Common myeloid progenitor, CD34-positive (primary cell): ENCODE measurements at regions of chr4 and their contacts with region 1.

Region 1: GRCh38 chr4:77618383-77619122 is 12.9 kb downstream of the CXCL13 start:
- DNase-seq: peak; percentile 57 to 83 (median 78)
- H3K4me3 ChIP-seq: peak overlapping the region in 1 of 7 experiments; percentile 44
- H3K27ac ChIP-seq: no peak overlapping the region
- H3K4me1 ChIP-seq: peaks cover 0 to 2% (median 0%) of the 10 kb centered on the region in 4 experiments
- H3K27me3 ChIP-seq: peaks cover 0 to 6% (median 0%) of the 10 kb centered on the region in 5 experiments

Region 2: DNA sequence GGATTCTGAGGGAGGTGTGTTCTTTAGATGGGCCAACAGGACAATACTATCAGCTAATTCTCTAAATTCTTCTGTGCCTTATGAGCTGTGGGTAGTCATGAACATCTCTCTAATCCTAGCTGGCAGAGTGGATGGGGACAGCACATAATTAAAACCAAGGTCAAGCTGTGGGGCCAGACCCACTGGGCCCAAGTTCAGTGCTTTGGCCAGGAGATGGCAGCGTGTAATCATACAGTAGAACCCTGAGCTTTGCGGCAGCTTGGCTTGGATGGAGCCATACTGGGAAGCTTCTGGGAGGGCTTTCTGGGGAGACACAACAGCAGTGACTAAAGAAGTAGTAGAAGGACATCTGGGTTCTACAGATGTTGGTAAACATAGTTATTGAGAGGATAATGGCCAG is 153.3 kb before region 1 on chr4:
- CTCF ChIA-PET with region 1: interaction called, 23 read pairs
- POLR2A ChIA-PET with region 1: no interaction called
- DNase-seq: peak; percentile 40 to 59 (median 44)
- H3K4me3 ChIP-seq: no peak overlapping the region
- H3K27ac ChIP-seq: no peak overlapping the region
- H3K4me1 ChIP-seq: no peaks in the 10 kb centered on the region
- H3K27me3 ChIP-seq: no peaks in the 10 kb centered on the region

Region 3: GRCh38 chr4:77590495-77590894 is 28.1 kb before region 1 on chr4:
- CTCF ChIA-PET with region 1: no interaction called
- POLR2A ChIA-PET with region 1: no interaction called
- DNase-seq: no peak
- H3K4me3 ChIP-seq: no peak overlapping the region
- H3K27ac ChIP-seq: no peak overlapping the region
- H3K4me1 ChIP-seq: peaks cover 13 to 40% (median 26%) of the 10 kb centered on the region in 4 experiments
- H3K27me3 ChIP-seq: no peaks in the 10 kb centered on the region

Region 4: GRCh38 chr4:77600521-77601451 is 17.8 kb before region 1 on chr4:
- CTCF ChIA-PET with region 1: interaction called, 16 read pairs
- POLR2A ChIA-PET with region 1: no interaction called
- DNase-seq: peak; percentile 36 to 58 (median 50)
- H3K4me3 ChIP-seq: no peak overlapping the region
- H3K27ac ChIP-seq: no peak overlapping the region
- H3K4me1 ChIP-seq: no peaks in the 10 kb centered on the region
- H3K27me3 ChIP-seq: peaks cover 0 to 2% (median 0%) of the 10 kb centered on the region in 5 experiments

Region 5: GRCh38 chr4:77629885-77630284 is 11.3 kb after region 1 on chr4:
- CTCF ChIA-PET with region 1: interaction called, 12 read pairs
- POLR2A ChIA-PET with region 1: no interaction called
- DNase-seq: no peak
- H3K4me3 ChIP-seq: no peak overlapping the region
- H3K27ac ChIP-seq: no peak overlapping the region
- H3K4me1 ChIP-seq: no peaks in the 10 kb centered on the region
- H3K27me3 ChIP-seq: no peaks in the 10 kb centered on the region

Region 6: GRCh38 chr4:77862478-77863216 is 244.1 kb after region 1 on chr4 and contains the start of gene MRPL1:
- CTCF ChIA-PET with region 1: interaction called, 10 read pairs
- POLR2A ChIA-PET with region 1: no interaction called
- DNase-seq: peak; percentile 97
- H3K4me3 ChIP-seq: peak within 1 kb of the TSS; percentile 84 to 100 (median 87)
- H3K27ac ChIP-seq: peak within 1 kb of the TSS; percentile 98 to 99
- H3K4me1 ChIP-seq: peaks cover 7 to 31% (median 21%) of the 10 kb centered on the region in 4 experiments
- H3K27me3 ChIP-seq: no peaks in the 10 kb centered on the region